ENCODE measurements at regions of chr21 and their contacts with region 1.

Region 1: GRCh38 chr21:44375281-44375651 is 21.8 kb downstream of the TRPM2 start:
- DNase-seq: no peak
- H3K4me3 ChIP-seq: no peak overlapping the region
- CTCF ChIP-seq: no peak

Region 2: GRCh38 chr21:44487831-44488230 is 112.6 kb after region 1 on chr21:
- in situ Hi-C with region 1: loop called (anchors 25 kb)
- DNase-seq: no peak
- H3K4me3 ChIP-seq: no peak overlapping the region
- CTCF ChIP-seq: peak; percentile 37

Measured in astrocyte of the cerebellum (primary cell).